Stomach (tissue), 19 donors: ENCODE measurements at regions of chr14 and their contacts with region 1.

Region 1: GRCh38 chr14:95098984-95099599 is 58.2 kb downstream of the DICER1 start:
- DNase-seq: peak; percentile 63 to 83
- H3K4me3 ChIP-seq: no peak overlapping the region
- H3K27ac ChIP-seq: no peak overlapping the region
- H3K4me1 ChIP-seq: peaks cover 0 to 37% (median 16%) of the 10 kb centered on the region in 4 donors
- H3K27me3 ChIP-seq: no peaks in the 10 kb centered on the region
- CTCF ChIP-seq: peak in 5 of 7 experiments; percentile 32 to 62 (median 52)
- EP300 ChIP-seq: no peak
- POLR2A ChIP-seq: no peak

Region 2: DNA sequence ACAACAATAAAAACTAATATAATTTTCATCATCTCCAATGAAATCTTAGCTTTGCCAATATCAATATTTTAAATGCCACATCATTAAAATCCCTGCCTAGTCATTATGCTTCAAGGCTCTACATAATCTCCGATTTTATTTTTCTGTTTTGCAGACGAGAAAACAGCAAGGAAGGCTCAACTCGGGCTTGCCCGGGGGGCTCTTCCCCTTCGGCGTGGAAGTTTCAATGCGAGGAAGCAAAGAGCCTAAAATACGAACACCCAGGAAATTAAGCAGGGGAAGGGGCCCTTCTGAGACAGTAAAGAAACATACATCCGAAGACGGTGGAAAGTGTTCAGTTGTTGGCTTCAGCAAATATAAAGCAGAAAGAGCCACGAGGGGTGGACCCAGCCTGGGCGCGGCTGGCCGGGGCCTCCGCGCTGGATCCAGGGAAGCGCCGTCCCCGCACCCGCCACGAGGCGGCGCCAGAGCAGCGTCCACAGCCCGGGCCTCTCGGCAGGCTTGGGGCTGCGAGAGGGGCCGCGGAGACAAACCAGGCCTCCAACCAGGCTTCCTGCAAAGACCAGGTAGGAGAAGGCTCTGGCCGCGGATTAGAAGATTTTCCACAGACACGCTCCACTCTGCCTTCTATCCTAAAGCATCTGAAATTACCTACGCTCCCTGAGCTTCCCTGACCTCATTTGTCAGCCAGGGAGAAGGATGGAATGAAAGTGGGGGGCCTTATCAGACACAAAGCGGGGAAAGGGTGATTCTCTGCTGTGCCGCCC is 409.7 kb before region 1 on chr14:
- intact Hi-C with region 1: loop called (anchors 10 kb)
- DNase-seq: peak; percentile 68 to 89
- H3K4me3 ChIP-seq: peak overlapping the region in 1 of 4 donors; percentile 26
- H3K27ac ChIP-seq: no peak overlapping the region
- H3K4me1 ChIP-seq: peaks cover 6 to 10% (median 8%) of the 10 kb centered on the region in 4 donors
- H3K27me3 ChIP-seq: peaks cover 0 to 20% (median 0%) of the 10 kb centered on the region in 3 donors
- CTCF ChIP-seq: peak in 5 of 7 experiments; percentile 76 to 96 (median 92)
- EP300 ChIP-seq: no peak
- POLR2A ChIP-seq: no peak

Region 3: DNA sequence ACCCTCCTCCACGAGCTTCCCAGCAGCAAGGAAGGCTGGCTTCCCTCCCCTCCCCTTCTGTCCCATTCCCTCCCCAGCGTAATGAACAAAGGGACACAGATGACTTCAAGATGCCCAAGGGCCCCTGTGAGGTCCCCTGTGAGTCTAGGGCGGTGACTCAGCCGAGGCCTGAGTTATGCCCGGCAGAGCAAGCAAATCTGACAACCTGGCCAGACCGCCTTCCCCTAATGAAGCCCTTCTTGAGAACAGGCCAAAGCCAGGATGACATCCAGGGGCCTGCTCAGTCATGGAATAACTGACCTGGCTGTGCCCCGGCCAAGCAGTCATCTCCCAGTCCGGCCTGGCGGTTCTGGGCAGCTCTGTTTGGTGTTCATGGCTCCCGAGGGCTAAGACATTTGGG is 31.0 kb before region 1 on chr14:
- intact Hi-C with region 1: no loop called
- DNase-seq: no peak
- H3K4me3 ChIP-seq: no peak overlapping the region
- H3K27ac ChIP-seq: no peak overlapping the region
- H3K4me1 ChIP-seq: no peaks in the 10 kb centered on the region
- H3K27me3 ChIP-seq: peaks cover 0 to 14% (median 0%) of the 10 kb centered on the region in 3 donors
- CTCF ChIP-seq: no peak
- EP300 ChIP-seq: no peak
- POLR2A ChIP-seq: no peak